Mammary epithelial cell (primary cell): ENCODE measurements at regions of chr16 and their contacts with region 1.

Region 1: DNA sequence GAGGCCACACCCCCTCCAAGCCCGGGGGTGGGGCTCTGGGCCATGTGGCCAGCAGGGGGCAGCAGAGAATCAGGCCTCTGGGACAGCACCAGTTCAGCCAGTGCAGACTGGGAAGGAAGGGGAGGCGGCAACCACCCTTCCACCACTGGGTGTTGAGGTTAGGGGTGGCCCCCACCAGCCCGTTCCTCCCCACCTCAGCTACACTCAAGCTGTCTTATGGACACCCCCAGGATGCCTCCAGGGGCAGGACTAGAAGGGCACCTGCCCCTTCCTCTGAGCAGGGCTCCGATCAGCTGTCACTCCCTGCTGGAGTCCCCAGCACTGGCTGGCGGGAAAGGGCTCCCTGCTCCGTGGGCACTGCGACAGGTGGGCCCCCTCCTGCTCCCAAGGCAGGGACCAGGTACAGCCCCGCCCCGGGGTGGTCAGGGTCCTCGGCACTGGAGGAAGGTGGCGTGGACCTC is 21.8 kb downstream of the KATNB1 start:
- DNase-seq: peak; percentile 62
- H3K4me3 ChIP-seq: no peak overlapping the region
- H3K27ac ChIP-seq: no peak overlapping the region
- H3K4me1 ChIP-seq: peaks cover 10% of the 10 kb centered on the region
- H3K27me3 ChIP-seq: no peaks in the 10 kb centered on the region
- CTCF ChIP-seq: peak; percentile 85 to 98

Region 2: GRCh38 chr16:57530104-57530521 is 227.2 kb before region 1 on chr16:
- CTCF ChIA-PET with region 1: no interaction called
- dilution Hi-C with region 1: no loop called
- in situ Hi-C with region 1: no loop called
- intact Hi-C with region 1: no loop called
- DNase-seq: no peak
- H3K4me3 ChIP-seq: no peak overlapping the region
- H3K27ac ChIP-seq: no peak overlapping the region
- H3K4me1 ChIP-seq: peaks cover 5% of the 10 kb centered on the region
- H3K27me3 ChIP-seq: no peaks in the 10 kb centered on the region
- CTCF ChIP-seq: no peak

Region 3: GRCh38 chr16:57689762-57690558 is 67.4 kb before region 1 on chr16:
- CTCF ChIA-PET with region 1: no interaction called
- dilution Hi-C with region 1: loop called (anchors 5 kb)
- in situ Hi-C with region 1: no loop called
- intact Hi-C with region 1: no loop called
- DNase-seq: no peak
- H3K4me3 ChIP-seq: no peak overlapping the region
- H3K27ac ChIP-seq: no peak overlapping the region
- H3K4me1 ChIP-seq: no peaks in the 10 kb centered on the region
- H3K27me3 ChIP-seq: no peaks in the 10 kb centered on the region
- CTCF ChIP-seq: no peak

Region 4: DNA sequence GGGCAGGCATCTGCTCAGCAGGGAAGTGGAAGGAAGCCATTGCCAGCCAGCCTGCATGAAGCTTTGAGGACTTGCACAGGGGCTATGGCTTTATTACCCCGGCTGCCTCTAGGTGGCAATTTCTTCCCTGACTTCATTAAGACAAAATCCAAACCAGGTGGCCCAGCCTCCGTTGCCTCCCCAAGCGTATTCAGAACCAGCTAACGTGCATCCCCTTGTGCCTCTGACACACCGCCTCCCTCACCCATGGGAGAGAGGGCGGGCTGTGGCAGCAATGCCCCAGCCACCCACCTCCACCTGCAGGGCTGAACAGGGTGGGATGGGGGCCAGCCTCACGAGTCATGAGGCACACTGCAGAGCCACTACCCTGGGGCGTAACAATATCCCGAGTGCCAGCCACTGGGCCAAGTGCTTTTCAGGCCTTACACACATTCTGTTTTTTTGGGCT is 38.1 kb after region 1 on chr16:
- CTCF ChIA-PET with region 1: no interaction called
- dilution Hi-C with region 1: loop called (anchors 5 kb)
- in situ Hi-C with region 1: no loop called
- intact Hi-C with region 1: loop called (anchors 1 kb)
- DNase-seq: peak; percentile 71
- H3K4me3 ChIP-seq: no peak overlapping the region
- H3K27ac ChIP-seq: no peak overlapping the region
- H3K4me1 ChIP-seq: peaks cover 36% of the 10 kb centered on the region
- H3K27me3 ChIP-seq: no peaks in the 10 kb centered on the region
- CTCF ChIP-seq: peak; percentile 37 to 70

Region 5: GRCh38 chr16:57863434-57864160 is 106.2 kb after region 1 on chr16:
- CTCF ChIA-PET with region 1: interaction called, 39 read pairs
- dilution Hi-C with region 1: no loop called
- in situ Hi-C with region 1: loop called in 1 of 2 experiments (anchors 10 kb)
- intact Hi-C with region 1: loop called (anchors 1 kb)
- DNase-seq: peak; percentile 45
- H3K4me3 ChIP-seq: no peak overlapping the region
- H3K27ac ChIP-seq: no peak overlapping the region
- H3K4me1 ChIP-seq: peaks cover 13% of the 10 kb centered on the region
- H3K27me3 ChIP-seq: no peaks in the 10 kb centered on the region
- CTCF ChIP-seq: peak; percentile 59 to 86

Region 6: DNA sequence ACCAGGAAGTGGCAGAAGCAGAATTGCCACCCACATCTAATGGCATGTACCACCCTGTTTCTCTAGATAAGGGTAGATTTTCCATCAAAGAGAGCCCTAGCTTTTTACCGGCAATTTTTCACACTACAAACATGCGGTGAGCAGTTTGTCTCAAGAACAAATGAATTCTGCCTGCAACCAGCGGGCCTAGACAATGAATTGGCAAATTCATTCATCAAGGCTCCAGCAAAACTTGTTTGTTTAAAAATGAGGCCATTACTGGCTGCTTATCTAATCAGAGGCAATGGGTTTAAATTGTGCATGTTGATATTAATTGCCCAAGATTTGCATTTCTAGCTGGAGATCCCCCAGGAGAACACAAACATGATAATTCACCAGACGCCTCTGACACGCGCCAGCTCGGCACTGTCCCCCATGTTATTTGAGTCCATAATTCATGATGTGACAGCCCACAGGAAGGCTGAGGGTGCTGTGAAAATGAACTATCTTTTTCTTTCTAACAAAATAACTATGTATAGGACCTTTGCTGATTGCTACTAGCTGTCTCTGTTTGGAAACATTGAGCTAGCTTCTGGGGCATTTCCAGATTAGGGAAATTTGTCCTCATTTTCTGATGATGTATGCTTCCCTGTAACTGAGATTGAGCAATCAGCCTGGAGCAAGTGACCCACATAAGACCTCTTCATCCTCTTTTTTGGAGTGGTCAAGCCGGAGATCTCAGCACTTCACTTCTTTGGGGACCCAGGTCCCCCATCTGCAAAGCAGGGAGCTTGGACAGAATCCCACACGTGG is 132.8 kb after region 1 on chr16:
- CTCF ChIA-PET with region 1: no interaction called
- dilution Hi-C with region 1: no loop called
- in situ Hi-C with region 1: no loop called
- intact Hi-C with region 1: loop called (anchors 2 kb)
- DNase-seq: no peak
- H3K4me3 ChIP-seq: no peak overlapping the region
- H3K27ac ChIP-seq: no peak overlapping the region
- H3K4me1 ChIP-seq: peaks cover 18% of the 10 kb centered on the region
- H3K27me3 ChIP-seq: no peaks in the 10 kb centered on the region
- CTCF ChIP-seq: no peak

Region 7: GRCh38 chr16:57899771-57900661 is 142.7 kb after region 1 on chr16:
- CTCF ChIA-PET with region 1: no interaction called
- dilution Hi-C with region 1: no loop called
- in situ Hi-C with region 1: no loop called
- intact Hi-C with region 1: loop called (anchors 1 kb)
- DNase-seq: peak; percentile 42
- H3K4me3 ChIP-seq: no peak overlapping the region
- H3K27ac ChIP-seq: no peak overlapping the region
- H3K4me1 ChIP-seq: peaks cover 3% of the 10 kb centered on the region
- H3K27me3 ChIP-seq: no peaks in the 10 kb centered on the region
- CTCF ChIP-seq: peak; percentile 90 to 95